Activated B cell treated with CpG ODN at 0.5 μM for 24 hours (primary cell): ENCODE measurements at regions of chr7 and their contacts with region 1.

Region 1: GRCh38 chr7:29319719-29320521 is 125.3 kb downstream of the CHN2 start:
- DNase-seq: no peak
- ATAC-seq: peak; percentile 93
- H3K4me3 Mint-ChIP-seq: no peak overlapping the region
- H3K27ac Mint-ChIP-seq: no peak overlapping the region
- H3K4me1 Mint-ChIP-seq: peaks cover 16% of the 10 kb centered on the region
- H3K27me3 Mint-ChIP-seq: no peaks in the 10 kb centered on the region
- CTCF ChIP-seq: no peak

Region 2: GRCh38 chr7:29285444-29285793 is 34.5 kb before region 1 on chr7:
- CTCF ChIA-PET with region 1: interaction called, 4 read pairs
- POLR2A ChIA-PET with region 1: interaction called, 6 read pairs
- intact Hi-C with region 1: loop called (anchors 1 kb)
- DNase-seq: no peak
- ATAC-seq: peak; percentile 16
- H3K4me3 Mint-ChIP-seq: no peak overlapping the region
- H3K27ac Mint-ChIP-seq: no peak overlapping the region
- H3K4me1 Mint-ChIP-seq: peaks cover 37% of the 10 kb centered on the region
- H3K27me3 Mint-ChIP-seq: peaks cover 5% of the 10 kb centered on the region
- CTCF ChIP-seq: no peak